ENCODE measurements at regions of chr11 and their contacts with region 1.

Region 1: DNA sequence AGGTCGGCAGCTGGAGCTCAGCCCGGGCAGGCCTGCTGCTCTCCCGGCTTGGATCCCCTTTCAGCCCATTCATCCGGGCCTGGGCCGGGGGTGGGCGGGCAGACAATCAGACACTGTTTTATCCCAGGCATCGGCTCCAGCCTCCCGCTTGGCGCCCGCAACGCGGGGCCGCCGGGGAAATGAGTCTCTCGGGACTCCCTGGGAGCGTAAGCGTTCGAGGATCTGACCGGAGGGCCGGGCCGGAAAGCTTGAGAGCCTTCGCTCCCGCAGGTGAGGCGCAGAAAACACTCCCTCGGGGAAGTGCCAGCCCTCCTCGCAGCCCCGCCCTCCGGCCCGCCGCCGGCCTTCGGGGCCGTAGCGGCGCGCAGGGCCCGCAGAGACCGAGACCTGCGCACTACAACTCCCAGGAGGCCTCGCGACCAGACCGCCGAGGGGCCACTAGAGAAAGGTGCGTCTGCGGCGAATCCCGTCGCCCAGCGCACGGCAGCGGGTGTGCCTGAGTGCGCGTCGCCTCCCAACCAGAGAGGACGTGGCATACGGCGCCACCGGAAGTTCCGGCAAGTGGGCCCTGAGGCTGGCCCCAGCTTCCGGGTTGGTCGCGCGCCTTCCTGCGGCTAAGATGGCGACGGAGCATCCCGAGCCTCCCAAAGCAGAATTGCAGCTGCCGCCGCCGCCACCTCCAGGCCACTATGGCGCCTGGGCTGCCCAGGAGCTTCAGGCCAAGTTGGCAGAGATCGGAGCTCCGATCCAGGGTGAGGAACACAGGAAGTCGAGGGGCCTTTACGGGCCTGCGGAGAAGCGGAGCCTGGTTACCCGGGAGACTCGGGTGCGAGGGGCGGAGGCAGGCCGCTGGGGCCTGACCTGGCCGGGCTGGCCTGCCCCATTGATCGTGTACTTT is at the start of gene SF3B2:
- DNase-seq: peak; percentile 96
- ATAC-seq: peak; percentile 99
- H3K4me3 Mint-ChIP-seq: peak within 1 kb of the TSS; percentile 99
- H3K27ac Mint-ChIP-seq: peak within 1 kb of the TSS; percentile 92
- H3K4me1 Mint-ChIP-seq: peaks cover 28% of the 10 kb centered on the region
- H3K27me3 Mint-ChIP-seq: peaks cover 10% of the 10 kb centered on the region
- total RNA-seq, gene SF3B2: 231 to 246 TPM

Region 2: GRCh38 chr11:66063900-66064299 is 11.9 kb after region 1 on chr11:
- POLR2A ChIA-PET with region 1: interaction called, 62 read pairs
- DNase-seq: no peak
- ATAC-seq: no peak
- H3K4me3 Mint-ChIP-seq: no peak overlapping the region
- H3K27ac Mint-ChIP-seq: peak overlapping the region; percentile 17
- H3K4me1 Mint-ChIP-seq: peaks cover 42% of the 10 kb centered on the region
- H3K27me3 Mint-ChIP-seq: no peaks in the 10 kb centered on the region

Measured in activated naive CD8-positive, alpha-beta T cell treated with anti-CD3 and anti-CD28 coated beads, Interleukin-2, amount 10 ng/mL, durations not matched to agents 7 days and 5 days (primary cell).